Activated B cell treated with CpG ODN at 0.5 μM for 24 hours (primary cell): ENCODE measurements at regions of chr19 and their contacts with region 1.

Region 1: DNA sequence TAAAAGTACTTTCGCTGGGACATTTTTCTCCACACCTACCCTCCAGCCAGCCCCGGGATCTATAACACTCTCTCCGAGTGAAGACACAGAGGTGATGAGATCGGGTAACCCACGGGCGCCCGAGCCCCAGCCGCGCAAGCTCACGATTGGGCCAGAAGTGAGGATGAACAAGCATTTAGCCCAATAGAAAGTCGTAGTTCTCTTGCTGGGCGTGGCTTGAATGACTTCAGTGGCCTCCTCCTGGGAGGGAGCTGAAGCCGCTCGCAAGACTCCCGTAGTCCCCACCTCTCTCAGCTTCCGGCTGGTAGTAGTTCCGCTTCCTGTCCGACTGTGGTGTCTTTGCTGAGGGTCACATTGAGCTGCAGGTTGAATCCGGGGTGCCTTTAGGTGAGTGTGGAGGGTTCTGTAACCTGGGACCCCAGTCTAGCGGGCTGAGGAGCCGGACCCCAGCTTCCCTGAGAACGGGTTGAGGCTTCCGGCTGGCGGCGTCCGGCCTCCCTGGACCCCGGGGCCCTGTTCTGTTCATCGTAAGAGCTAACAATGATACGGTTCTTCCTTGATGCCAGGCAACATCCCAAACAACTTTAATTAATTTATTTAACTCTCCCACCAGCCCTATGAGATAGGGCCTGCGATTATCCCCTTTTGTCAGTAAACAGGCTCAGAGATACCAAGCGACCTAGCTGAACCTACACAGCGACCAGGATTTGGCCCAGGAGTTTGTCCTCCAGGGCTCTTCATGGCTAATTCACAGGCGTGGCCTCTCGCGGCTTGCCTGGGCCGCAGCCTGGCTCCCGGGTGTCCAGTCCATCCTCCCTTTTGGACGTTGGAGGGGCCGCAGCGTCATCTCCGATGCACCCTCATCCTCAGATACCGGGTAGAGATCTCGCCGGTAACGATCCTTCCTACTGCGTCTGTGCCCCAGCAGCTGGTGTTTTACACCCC is at the start of gene COX6B1:
- DNase-seq: peak; percentile 72
- ATAC-seq: peak; percentile 66
- H3K4me3 Mint-ChIP-seq: peak within 1 kb of the TSS; percentile 96
- H3K27ac Mint-ChIP-seq: peak within 1 kb of the TSS; percentile 87
- H3K4me1 Mint-ChIP-seq: peaks cover 37% of the 10 kb centered on the region
- H3K27me3 Mint-ChIP-seq: no peaks in the 10 kb centered on the region
- CTCF ChIP-seq: no peak
- total RNA-seq, gene COX6B1: 334 and 401 TPM in 2 replicates

Region 2: DNA sequence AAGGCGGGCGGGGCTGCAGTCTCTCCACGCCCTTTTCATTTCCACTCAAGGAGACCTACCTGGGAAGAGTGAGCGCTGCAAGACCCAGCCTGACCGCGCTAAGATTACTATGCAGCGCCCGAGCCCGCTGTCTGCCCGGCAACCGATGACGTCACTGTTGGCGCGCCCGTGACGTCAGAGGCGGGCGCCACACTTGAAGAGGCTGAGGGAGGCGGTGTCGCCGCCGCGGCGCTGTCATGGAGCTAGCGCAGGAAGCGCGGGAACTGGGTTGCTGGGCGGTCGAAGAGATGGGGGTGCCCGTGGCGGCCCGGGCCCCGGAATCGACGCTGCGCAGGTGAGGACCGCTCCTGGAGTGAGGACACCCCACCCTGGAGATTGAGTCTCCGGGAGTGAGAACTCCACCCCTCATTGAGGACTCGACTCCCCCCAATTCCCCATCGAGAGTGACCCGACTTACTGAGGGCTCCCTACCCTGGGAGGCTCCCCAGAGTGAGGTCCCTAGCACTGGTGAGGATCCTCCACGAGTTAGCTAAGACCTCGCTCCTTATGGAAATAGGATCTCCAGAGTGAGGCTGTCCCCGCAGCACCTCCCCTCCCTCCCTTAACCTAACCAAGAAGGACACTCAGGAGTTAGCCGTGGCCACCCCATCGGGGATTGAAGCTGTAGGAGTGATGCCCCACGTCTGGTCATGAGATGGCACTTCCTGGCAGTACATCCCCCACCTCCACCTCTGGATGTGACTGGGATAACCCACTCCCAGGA is 35.5 kb before region 1 on chr19 and contains the start of gene HAUS5:
- CTCF ChIA-PET with region 1: interaction called, 3 read pairs
- POLR2A ChIA-PET with region 1: interaction called, 19 read pairs
- intact Hi-C with region 1: loop called (anchors 1 kb)
- DNase-seq: peak; percentile 99
- ATAC-seq: peak; percentile 78
- H3K4me3 Mint-ChIP-seq: peak within 1 kb of the TSS; percentile 87
- H3K27ac Mint-ChIP-seq: peak within 1 kb of the TSS; percentile 93
- H3K4me1 Mint-ChIP-seq: peaks cover 48% of the 10 kb centered on the region
- H3K27me3 Mint-ChIP-seq: no peaks in the 10 kb centered on the region
- CTCF ChIP-seq: no peak
- total RNA-seq, gene HAUS5: 31.5 and 36.1 TPM in 2 replicates

Region 3: GRCh38 chr19:35828692-35829301 is 180.5 kb after region 1 on chr19:
- CTCF ChIA-PET with region 1: no interaction called
- POLR2A ChIA-PET with region 1: no interaction called
- intact Hi-C with region 1: no loop called
- DNase-seq: no peak
- ATAC-seq: peak; percentile 37
- H3K4me3 Mint-ChIP-seq: no peak overlapping the region
- H3K27ac Mint-ChIP-seq: no peak overlapping the region
- H3K4me1 Mint-ChIP-seq: no peaks in the 10 kb centered on the region
- H3K27me3 Mint-ChIP-seq: peaks cover 29% of the 10 kb centered on the region
- CTCF ChIP-seq: no peak

Region 4: GRCh38 chr19:35856546-35857149 is 208.4 kb after region 1 on chr19 and contains the start of gene KIRREL2:
- CTCF ChIA-PET with region 1: no interaction called
- POLR2A ChIA-PET with region 1: no interaction called
- intact Hi-C with region 1: no loop called
- DNase-seq: peak; percentile 38
- ATAC-seq: peak; percentile 28
- H3K4me3 Mint-ChIP-seq: peak within 1 kb of the TSS; percentile 78
- H3K27ac Mint-ChIP-seq: no peak within 1 kb of the TSS
- H3K4me1 Mint-ChIP-seq: peaks cover 14% of the 10 kb centered on the region
- H3K27me3 Mint-ChIP-seq: peaks cover 54% of the 10 kb centered on the region
- CTCF ChIP-seq: no peak
- total RNA-seq, gene KIRREL2: not detected in 2 replicates